Left cardiac atrium (tissue), 4 donors: ENCODE measurements at regions of chr14 and their contacts with region 1.

Region 1: GRCh38 chr14:38989922-38990546 is 113.0 kb downstream of the SEC23A start:
- DNase-seq: no peak
- ATAC-seq: no peak

Region 2: DNA sequence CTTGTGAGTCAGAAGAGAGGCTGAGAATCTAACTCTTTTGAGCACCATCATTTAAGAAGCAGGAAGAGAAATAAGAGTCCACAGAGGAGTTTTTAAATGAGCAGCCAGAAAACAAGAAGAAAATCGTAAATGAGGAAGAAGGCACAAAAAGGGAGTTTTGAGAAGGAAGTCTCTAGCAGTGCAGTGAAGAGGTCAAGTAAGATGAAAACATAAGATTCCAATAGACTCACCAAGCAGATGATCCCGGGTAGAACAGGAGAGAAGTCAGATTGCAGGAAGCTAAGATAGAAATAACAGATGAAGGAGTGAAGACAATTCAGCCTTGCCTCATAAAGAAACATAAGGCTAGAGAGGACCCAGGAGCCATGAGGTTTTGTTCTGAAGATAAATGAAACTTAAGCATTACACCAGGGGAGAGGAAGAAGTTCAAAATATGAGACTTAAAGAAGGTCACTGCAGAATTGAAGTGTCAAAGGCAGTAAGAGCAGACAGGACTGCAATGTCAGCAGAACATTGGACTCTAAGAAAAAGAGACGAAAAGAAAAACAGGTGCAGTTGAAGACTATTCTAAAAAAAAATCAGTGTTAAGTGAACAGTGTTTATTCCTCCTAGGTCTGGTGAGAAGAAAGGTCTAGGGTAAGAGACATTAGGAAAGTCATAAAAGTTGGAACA is 116.0 kb before region 1 on chr14:
- intact Hi-C with region 1: loop called in 1 of 2 experiments (anchors 10 kb)
- DNase-seq: no peak
- ATAC-seq: no peak

Region 3: DNA sequence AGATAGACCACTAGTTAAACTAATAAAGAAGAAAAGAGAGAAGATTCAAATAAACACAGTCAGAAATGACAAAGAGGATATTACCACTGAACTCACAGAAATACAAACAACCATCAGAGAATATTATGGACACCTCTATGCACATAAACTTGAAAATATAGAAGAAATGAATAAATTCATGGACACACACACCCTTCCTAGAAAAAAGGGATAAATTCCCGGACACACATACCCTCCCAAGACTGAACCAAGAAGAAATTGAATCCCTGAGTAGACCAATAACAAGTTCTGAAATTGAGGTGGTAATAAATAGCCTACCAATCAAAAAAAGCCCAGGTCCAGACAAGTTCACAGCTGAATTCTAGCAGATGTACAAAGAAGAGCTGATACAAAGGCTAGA is 74.9 kb before region 1 on chr14:
- intact Hi-C with region 1: no loop called
- DNase-seq: no peak
- ATAC-seq: no peak